Gastrocnemius medialis (tissue), 4 donors: ENCODE measurements at regions of chr2 and their contacts with region 1.

Region 1: DNA sequence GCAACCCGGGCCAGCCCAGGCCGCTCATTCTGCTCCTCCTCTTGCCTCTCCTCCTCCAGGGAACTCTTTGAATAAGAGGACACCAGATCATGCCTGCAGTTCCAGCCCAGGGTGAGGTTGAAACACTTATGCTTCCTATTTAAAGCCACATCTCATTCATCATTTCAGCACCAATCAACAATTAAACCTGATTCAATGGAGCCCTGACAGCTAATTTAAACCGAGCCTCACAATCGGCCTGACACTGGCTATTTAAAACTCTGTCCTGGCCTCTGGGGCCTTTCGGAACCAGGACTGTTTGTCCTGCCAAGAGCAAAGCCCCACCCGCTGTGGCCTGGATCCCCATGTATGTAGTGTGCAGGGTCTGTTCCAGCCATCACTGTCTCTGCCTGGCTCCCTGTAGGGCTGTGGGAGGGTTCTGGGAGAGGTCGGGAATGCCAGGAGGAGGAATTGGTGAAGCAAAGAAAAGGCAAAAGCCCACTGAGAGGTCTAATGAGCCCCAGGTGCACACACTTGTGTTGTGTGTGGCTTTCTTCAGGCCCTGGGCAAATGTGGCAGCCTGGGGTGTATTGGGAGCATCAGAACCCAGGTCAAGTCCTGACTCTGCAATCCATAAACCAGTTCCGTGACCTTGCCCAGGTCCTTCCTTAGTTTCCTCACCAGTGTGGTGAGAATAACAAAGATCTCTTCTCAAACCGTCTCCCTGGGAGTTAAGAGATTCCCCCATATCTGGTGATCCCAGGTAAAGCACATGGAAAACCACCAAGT is 97.3 kb downstream of the MCFD2 start:
- DNase-seq: peak; percentile 86 to 94
- ATAC-seq: peak; percentile 94
- H3K4me3 ChIP-seq: no peak overlapping the region
- H3K27ac ChIP-seq: peak overlapping the region; percentile 81 to 89 (median 86)
- H3K4me1 ChIP-seq: peaks cover 37 to 54% of the 10 kb centered on the region in 2 donors
- H3K27me3 ChIP-seq: no peaks in the 10 kb centered on the region
- CTCF ChIP-seq: no peak
- POLR2A ChIP-seq: peak in 1 of 2 donors; percentile 24

Region 2: GRCh38 chr2:46850777-46851176 is 32.5 kb after region 1 on chr2:
- in situ Hi-C with region 1: no loop called
- intact Hi-C with region 1: loop called (anchors 2 kb)
- DNase-seq: peak; percentile 52 to 71
- ATAC-seq: peak; percentile 79 to 87
- H3K4me3 ChIP-seq: no peak overlapping the region
- H3K27ac ChIP-seq: peak overlapping the region; percentile 59 to 80 (median 76)
- H3K4me1 ChIP-seq: peaks cover 63 to 68% of the 10 kb centered on the region in 2 donors
- H3K27me3 ChIP-seq: no peaks in the 10 kb centered on the region
- CTCF ChIP-seq: no peak
- POLR2A ChIP-seq: no peak